ENCODE measurements at regions of chr14 and their contacts with region 1.

Region 1: GRCh38 chr14:67240978-67241414 is 239 bp upstream of the PALS1 start:
- DNase-seq: peak; percentile 96
- ATAC-seq: peak; percentile 95
- H3K4me3 ChIP-seq: peak overlapping the region; percentile 83
- H3K27ac ChIP-seq: peak overlapping the region; percentile 81; the same call in 1 of the 2 replicates
- H3K4me1 ChIP-seq: peaks cover 4% of the 10 kb centered on the region
- H3K27me3 ChIP-seq: no peaks in the 10 kb centered on the region
- CTCF ChIP-seq: no peak
- POLR2A ChIP-seq: no peak; the same call in 1 of the 2 replicates
- RAD21 ChIP-seq: no peak

Region 2: GRCh38 chr14:67151131-67151569 is 89.8 kb before region 1 on chr14:
- CTCF ChIA-PET with region 1: no interaction called
- POLR2A ChIA-PET with region 1: no interaction called
- dilution Hi-C with region 1: no loop called
- in situ Hi-C with region 1: no loop called
- intact Hi-C with region 1: no loop called
- DNase-seq: no peak
- ATAC-seq: no peak
- H3K4me3 ChIP-seq: no peak overlapping the region
- H3K27ac ChIP-seq: no peak overlapping the region
- H3K4me1 ChIP-seq: no peaks in the 10 kb centered on the region
- H3K27me3 ChIP-seq: no peaks in the 10 kb centered on the region
- CTCF ChIP-seq: peak; percentile 23; the same call in 1 of the 2 replicates
- POLR2A ChIP-seq: no peak
- RAD21 ChIP-seq: no peak

Region 3: GRCh38 chr14:67221248-67221981 is 19.6 kb before region 1 on chr14:
- CTCF ChIA-PET with region 1: no interaction called
- POLR2A ChIA-PET with region 1: no interaction called
- dilution Hi-C with region 1: no loop called
- in situ Hi-C with region 1: no loop called
- intact Hi-C with region 1: no loop called
- DNase-seq: peak; percentile 80
- ATAC-seq: peak; percentile 92
- H3K4me3 ChIP-seq: no peak overlapping the region
- H3K27ac ChIP-seq: 0 out of 2 replicates have a peak overlapping the region, but pooled peaks have one; percentile 38
- H3K4me1 ChIP-seq: peaks cover 5% of the 10 kb centered on the region; the same call in 1 of the 2 replicates
- H3K27me3 ChIP-seq: no peaks in the 10 kb centered on the region
- CTCF ChIP-seq: no peak
- POLR2A ChIP-seq: no peak
- RAD21 ChIP-seq: no peak

Region 4: DNA sequence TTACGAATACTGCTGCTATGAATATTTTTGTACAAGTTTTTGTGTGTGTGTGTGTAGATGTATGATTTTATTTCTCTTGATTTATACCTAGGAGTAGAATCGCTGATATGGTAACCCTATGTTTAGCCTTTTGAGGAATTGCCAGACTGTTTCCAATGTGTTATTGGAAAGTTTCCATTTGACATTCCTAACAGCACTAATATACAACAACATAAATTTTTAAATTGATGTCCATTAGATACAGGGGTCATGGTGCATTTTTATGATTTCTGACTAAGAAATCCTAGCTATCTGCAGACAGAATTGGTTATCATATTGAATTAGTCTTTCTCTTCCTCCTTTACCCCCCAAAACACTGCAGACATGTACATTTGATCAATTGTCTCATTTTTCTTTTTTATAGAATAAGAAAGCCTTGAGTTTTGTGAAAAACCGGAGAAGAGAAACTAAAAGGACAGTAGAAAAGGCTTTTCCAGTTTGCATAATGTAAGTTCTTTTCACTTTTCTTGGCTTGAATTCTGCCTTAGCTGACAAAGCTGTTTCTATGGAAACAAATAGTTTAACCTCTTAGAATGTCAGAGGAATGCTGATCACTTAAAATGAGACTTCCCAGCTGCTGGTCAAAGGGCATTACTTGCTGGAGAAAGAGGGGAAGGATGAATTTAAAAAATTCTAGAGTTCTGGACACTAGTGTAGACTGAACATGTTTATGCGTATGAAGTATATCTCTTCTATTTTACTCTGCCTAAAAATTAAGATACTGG is 28.5 kb after region 1 on chr14:
- CTCF ChIA-PET with region 1: no interaction called
- POLR2A ChIA-PET with region 1: no interaction called
- dilution Hi-C with region 1: no loop called
- in situ Hi-C with region 1: no loop called
- intact Hi-C with region 1: loop called (anchors 2 kb)
- DNase-seq: peak; percentile 87
- ATAC-seq: peak; percentile 70
- H3K4me3 ChIP-seq: no peak overlapping the region; the same call in 1 of the 2 replicates
- H3K27ac ChIP-seq: peak overlapping the region; percentile 88; the same call in 1 of the 2 replicates
- H3K4me1 ChIP-seq: peaks cover 6% of the 10 kb centered on the region
- H3K27me3 ChIP-seq: no peaks in the 10 kb centered on the region
- CTCF ChIP-seq: no peak
- POLR2A ChIP-seq: no peak
- RAD21 ChIP-seq: no peak

Region 5: DNA sequence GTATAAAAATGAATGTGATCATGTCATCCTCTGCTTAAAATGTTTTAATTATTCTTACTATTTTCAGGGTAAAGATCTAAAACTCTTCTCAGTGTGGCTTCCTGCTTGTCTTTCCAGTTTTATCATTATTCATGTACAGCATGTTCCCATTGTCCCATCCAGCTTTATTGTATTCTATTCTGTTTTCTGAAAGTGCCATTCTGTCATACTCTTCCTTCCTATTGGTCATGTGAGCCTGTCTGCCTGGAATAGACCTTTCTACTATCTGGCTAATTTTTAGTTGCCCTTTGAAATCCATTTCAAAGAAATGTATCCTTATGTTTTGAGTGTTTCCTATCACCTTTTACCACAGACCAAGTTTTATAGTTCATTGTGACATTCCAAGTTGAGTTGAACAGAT is 35.1 kb after region 1 on chr14:
- CTCF ChIA-PET with region 1: no interaction called
- POLR2A ChIA-PET with region 1: no interaction called
- dilution Hi-C with region 1: no loop called
- in situ Hi-C with region 1: no loop called
- intact Hi-C with region 1: loop called (anchors 5 kb)
- DNase-seq: no peak
- ATAC-seq: no peak
- H3K4me3 ChIP-seq: no peak overlapping the region
- H3K27ac ChIP-seq: no peak overlapping the region
- H3K4me1 ChIP-seq: no peaks in the 10 kb centered on the region
- H3K27me3 ChIP-seq: no peaks in the 10 kb centered on the region
- CTCF ChIP-seq: no peak
- POLR2A ChIP-seq: no peak
- RAD21 ChIP-seq: no peak

Region 6: DNA sequence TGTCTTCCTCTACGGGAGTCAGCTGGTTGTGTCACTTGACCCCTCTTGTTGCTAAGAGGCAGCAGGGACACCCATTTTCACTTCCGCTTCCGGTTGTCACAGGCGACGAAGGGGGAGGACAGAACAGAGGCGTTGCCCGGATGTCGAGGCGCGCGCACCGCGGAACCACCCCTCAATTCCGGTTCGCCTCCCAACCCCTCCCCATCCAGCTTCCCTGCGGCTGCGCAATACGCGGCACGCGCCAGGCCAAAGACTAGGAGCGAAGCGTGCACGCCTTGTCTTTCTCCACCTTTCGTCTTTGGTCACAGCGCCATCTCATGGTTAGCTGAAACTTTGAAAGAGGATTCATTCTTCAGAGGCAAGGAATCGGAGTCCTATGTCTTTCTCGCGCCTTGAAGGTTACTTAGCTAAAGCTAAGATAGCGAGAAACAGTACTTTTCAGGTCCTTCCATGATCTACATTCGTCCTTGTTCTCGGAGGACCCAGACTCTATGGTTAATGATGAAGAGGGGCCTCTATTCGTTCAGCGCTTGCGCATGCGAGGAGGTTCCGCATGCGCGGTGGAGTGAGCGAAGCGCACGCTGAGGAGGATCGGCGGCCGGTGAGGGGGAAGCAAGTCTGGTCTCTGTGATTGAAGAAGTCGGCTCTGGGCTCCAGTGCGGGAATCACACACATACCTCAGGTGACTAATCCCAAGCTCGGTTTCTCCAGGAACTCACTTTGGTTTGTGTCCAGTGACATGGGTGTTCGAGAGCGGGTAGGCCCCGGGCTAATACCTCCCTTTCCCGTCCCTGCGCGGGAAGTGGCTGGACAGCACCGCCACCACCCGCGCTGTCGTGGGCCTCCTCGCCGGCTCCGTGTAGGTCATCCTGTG is 119.0 kb after region 1 on chr14 and contains the starts of genes ATP6V1D and EIF2S1:
- CTCF ChIA-PET with region 1: no interaction called
- POLR2A ChIA-PET with region 1: no interaction called
- dilution Hi-C with region 1: no loop called
- in situ Hi-C with region 1: no loop called
- intact Hi-C with region 1: loop called (anchors 1 kb)
- DNase-seq: peak; percentile 99
- ATAC-seq: peak; percentile 97
- H3K4me3 ChIP-seq: peak within 1 kb of the TSS; percentile 96
- H3K27ac ChIP-seq: peak within 1 kb of the TSS; percentile 87
- H3K4me1 ChIP-seq: peaks cover 2% of the 10 kb centered on the region; the same call in 1 of the 2 replicates
- H3K27me3 ChIP-seq: no peaks in the 10 kb centered on the region
- CTCF ChIP-seq: peak; percentile 94
- POLR2A ChIP-seq: peak; percentile 79
- RAD21 ChIP-seq: peak; percentile 29
- total RNA-seq, gene ATP6V1D: 113 and 167 TPM in 2 replicates
- total RNA-seq, gene EIF2S1: 125 and 360 TPM in 2 replicates

Region 7: DNA sequence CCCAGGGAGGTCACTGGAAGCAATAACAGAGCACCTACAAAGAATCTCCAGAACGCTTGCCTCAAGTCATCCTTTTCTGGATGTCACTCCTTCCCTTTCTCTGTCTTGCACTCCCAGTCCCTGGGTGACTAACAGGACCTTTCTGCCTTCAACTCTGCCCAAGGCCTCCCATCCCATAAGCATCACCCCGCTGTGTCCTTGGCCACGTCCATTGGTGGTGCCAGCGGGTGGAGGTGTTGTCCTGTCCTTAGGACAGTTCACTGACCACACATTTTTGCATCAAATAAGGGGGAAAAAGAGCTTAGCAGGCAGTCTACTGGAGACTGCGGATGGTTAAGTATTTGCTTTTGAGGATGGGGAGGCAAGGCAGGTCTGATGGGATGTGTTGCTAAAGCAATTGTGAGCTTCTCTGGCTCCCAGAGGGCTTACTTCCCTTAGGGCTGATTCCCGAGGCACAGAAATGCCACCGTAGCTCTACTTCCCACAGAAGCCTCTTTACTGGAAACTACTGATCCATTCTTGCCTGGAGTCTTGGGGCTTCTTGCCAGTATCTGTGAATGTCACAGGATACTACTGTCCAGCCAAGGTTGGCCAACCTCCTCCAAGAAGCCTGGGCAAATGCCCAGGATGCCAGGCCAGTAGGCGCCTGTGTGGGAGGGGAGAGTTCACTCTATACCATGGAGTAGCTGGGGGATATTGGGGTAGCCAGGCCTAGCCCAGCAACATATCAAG is 194.8 kb after region 1 on chr14:
- CTCF ChIA-PET with region 1: no interaction called
- POLR2A ChIA-PET with region 1: no interaction called
- dilution Hi-C with region 1: no loop called
- in situ Hi-C with region 1: no loop called
- intact Hi-C with region 1: no loop called
- DNase-seq: no peak
- ATAC-seq: no peak
- H3K4me3 ChIP-seq: no peak overlapping the region
- H3K27ac ChIP-seq: no peak overlapping the region
- H3K4me1 ChIP-seq: no peaks in the 10 kb centered on the region
- H3K27me3 ChIP-seq: peaks cover 35% of the 10 kb centered on the region
- CTCF ChIP-seq: no peak
- POLR2A ChIP-seq: no peak
- RAD21 ChIP-seq: no peak

Measured in IMR-90 (cell line).